ENCODE measurements at regions of chr10 and their contacts with region 1.

Region 1: GRCh38 chr10:34696423-34696822 is 118.7 kb downstream of the PARD3 start:
- DNase-seq: peak in 1 of 2 experiments; percentile 73
- H3K4me3 ChIP-seq: no peak overlapping the region
- H3K27ac ChIP-seq: no peak overlapping the region
- H3K4me1 ChIP-seq: peaks cover 55% of the 10 kb centered on the region
- H3K27me3 ChIP-seq: no peaks in the 10 kb centered on the region
- CTCF ChIP-seq: no peak

Region 2: GRCh38 chr10:34710391-34710751 is 13.9 kb after region 1 on chr10:
- CTCF ChIA-PET with region 1: no interaction called
- POLR2A ChIA-PET with region 1: no interaction called
- intact Hi-C with region 1: loop called (anchors 1 kb)
- DNase-seq: peak; percentile 44 to 65
- H3K4me3 ChIP-seq: no peak overlapping the region
- H3K27ac ChIP-seq: peak overlapping the region; percentile 41
- H3K4me1 ChIP-seq: peaks cover 35% of the 10 kb centered on the region
- H3K27me3 ChIP-seq: no peaks in the 10 kb centered on the region
- CTCF ChIP-seq: no peak

Region 3: GRCh38 chr10:34732926-34733325 is 36.5 kb after region 1 on chr10:
- CTCF ChIA-PET with region 1: no interaction called
- POLR2A ChIA-PET with region 1: no interaction called
- intact Hi-C with region 1: loop called (anchors 5 kb)
- DNase-seq: peak in 1 of 2 experiments; percentile 56
- H3K4me3 ChIP-seq: no peak overlapping the region
- H3K27ac ChIP-seq: peak overlapping the region; percentile 79
- H3K4me1 ChIP-seq: peaks cover 45% of the 10 kb centered on the region
- H3K27me3 ChIP-seq: no peaks in the 10 kb centered on the region
- CTCF ChIP-seq: no peak; the same call in 1 of the 2 replicates

Region 4: DNA sequence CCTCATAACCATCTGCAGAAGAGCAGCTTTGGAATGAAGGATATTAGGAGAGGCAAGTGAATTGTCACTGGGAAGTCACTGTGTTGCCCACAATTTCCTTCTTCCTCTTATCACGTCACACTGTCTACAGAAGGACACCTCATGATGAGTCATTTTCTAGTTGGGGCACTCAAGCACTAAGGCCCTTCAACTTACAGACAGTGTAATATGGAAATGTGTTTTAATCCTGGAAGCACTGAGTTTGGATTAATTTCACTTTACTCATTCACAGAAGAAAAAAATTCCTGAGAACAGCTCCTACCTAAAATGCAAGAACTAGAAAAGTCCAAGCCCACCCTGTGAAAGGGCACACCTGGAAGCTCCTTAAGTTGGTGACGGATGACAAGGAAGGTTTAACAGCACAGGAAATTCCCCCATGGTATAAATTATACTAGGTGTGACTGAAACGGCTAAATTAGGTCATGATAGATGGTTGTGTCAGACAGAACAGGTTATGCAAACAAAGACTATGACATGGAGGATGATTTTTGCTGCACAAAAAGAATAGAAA is 62.1 kb after region 1 on chr10:
- CTCF ChIA-PET with region 1: no interaction called
- POLR2A ChIA-PET with region 1: no interaction called
- intact Hi-C with region 1: loop called (anchors 2 kb)
- DNase-seq: peak; percentile 52 to 94
- H3K4me3 ChIP-seq: no peak overlapping the region
- H3K27ac ChIP-seq: peak overlapping the region; percentile 82
- H3K4me1 ChIP-seq: peaks cover 20% of the 10 kb centered on the region
- H3K27me3 ChIP-seq: no peaks in the 10 kb centered on the region
- CTCF ChIP-seq: no peak

Region 5: GRCh38 chr10:34815185-34816084 is 119.0 kb after region 1 on chr10 and contains the start of gene PARD3:
- CTCF ChIA-PET with region 1: no interaction called
- POLR2A ChIA-PET with region 1: no interaction called
- intact Hi-C with region 1: no loop called
- DNase-seq: peak in 1 of 2 experiments; percentile 64
- H3K4me3 ChIP-seq: peak within 1 kb of the TSS; percentile 63
- H3K27ac ChIP-seq: no peak within 1 kb of the TSS
- H3K4me1 ChIP-seq: peaks cover 25% of the 10 kb centered on the region
- H3K27me3 ChIP-seq: no peaks in the 10 kb centered on the region
- CTCF ChIP-seq: no peak
- total RNA-seq, gene PARD3: 57.4 and 61.9 TPM in 2 replicates

Region 6: DNA sequence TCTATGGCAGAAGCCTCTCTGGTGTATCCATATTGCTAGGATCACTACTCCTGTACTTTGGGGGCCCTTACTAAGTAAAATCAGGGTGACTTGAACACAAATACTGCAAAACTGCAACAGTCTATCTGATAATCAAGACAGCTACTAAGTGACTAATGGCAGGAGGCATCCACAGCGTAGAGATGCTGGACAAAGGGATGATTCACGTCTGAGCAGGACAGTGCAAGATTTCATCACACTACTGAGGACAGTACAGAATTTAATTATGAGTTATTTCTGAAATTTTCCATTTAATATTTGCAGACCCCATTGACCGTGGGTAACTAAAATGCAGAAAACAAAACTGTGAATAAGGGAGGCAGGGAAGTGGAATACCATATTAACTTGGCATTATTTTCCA is 383.3 kb after region 1 on chr10:
- CTCF ChIA-PET with region 1: no interaction called
- POLR2A ChIA-PET with region 1: no interaction called
- intact Hi-C with region 1: no loop called
- DNase-seq: no peak
- H3K4me3 ChIP-seq: no peak overlapping the region
- H3K27ac ChIP-seq: no peak overlapping the region
- H3K4me1 ChIP-seq: no peaks in the 10 kb centered on the region
- H3K27me3 ChIP-seq: no peaks in the 10 kb centered on the region
- CTCF ChIP-seq: no peak

Region 7: GRCh38 chr10:35854661-35855060 is 1158.2 kb after region 1 on chr10:
- CTCF ChIA-PET with region 1: no interaction called
- POLR2A ChIA-PET with region 1: no interaction called
- intact Hi-C with region 1: no loop called
- DNase-seq: no peak
- H3K4me3 ChIP-seq: no peak overlapping the region
- H3K27ac ChIP-seq: no peak overlapping the region
- H3K4me1 ChIP-seq: no peaks in the 10 kb centered on the region
- H3K27me3 ChIP-seq: no peaks in the 10 kb centered on the region
- CTCF ChIP-seq: no peak

Measured in PC-9 (cell line).